ENCODE measurements at regions of chr11 and their contacts with region 1.

Region 1: GRCh38 chr11:130213143-130213978 is 53.8 kb downstream of the ST14 start:
- DNase-seq: peak; percentile 84
- ATAC-seq: peak; percentile 70
- H3K4me3 Mint-ChIP-seq: no peak overlapping the region
- H3K27ac Mint-ChIP-seq: no peak overlapping the region
- H3K4me1 Mint-ChIP-seq: peaks cover 22% of the 10 kb centered on the region
- H3K27me3 Mint-ChIP-seq: no peaks in the 10 kb centered on the region
- CTCF ChIP-seq: peak; percentile 99

Region 2: GRCh38 chr11:130223291-130223971 is 10.1 kb after region 1 on chr11:
- CTCF ChIA-PET with region 1: interaction called, 10 read pairs
- POLR2A ChIA-PET with region 1: interaction called, 3 read pairs
- DNase-seq: no peak
- ATAC-seq: no peak
- H3K4me3 Mint-ChIP-seq: no peak overlapping the region
- H3K27ac Mint-ChIP-seq: peak overlapping the region; percentile 31; the same call in 1 of the 2 replicates
- H3K4me1 Mint-ChIP-seq: no peaks in the 10 kb centered on the region
- H3K27me3 Mint-ChIP-seq: no peaks in the 10 kb centered on the region
- CTCF ChIP-seq: no peak

Region 3: DNA sequence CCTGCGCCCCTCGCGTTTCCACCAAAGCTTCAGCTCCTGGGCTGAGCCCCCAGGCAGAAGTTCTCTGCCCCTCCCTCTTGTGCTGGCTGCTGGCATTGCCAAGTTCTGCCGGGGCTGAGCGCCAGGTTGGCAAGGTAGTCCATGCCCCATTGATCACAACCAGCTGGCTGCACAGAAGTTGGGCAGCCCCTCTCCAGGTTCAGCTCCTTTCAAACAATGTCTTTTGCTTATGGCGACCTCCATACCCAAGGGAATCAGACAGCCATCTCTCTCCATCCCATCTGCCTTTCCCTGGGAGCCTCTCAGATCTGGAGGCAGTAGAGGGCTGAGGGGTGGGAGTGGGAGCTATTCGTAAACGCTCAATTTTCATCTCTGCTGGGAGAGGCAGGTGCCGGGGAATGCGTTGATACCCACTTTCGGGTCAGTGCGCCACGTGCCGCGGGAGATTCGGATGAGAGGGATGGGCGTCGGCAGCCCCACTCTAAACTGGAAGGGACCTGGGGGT is 213.5 kb after region 1 on chr11:
- CTCF ChIA-PET with region 1: interaction called, 39 read pairs
- POLR2A ChIA-PET with region 1: no interaction called
- DNase-seq: no peak
- ATAC-seq: no peak
- H3K4me3 Mint-ChIP-seq: peak overlapping the region; percentile 69
- H3K27ac Mint-ChIP-seq: no peak overlapping the region
- H3K4me1 Mint-ChIP-seq: peaks cover 25% of the 10 kb centered on the region
- H3K27me3 Mint-ChIP-seq: peaks cover 46% of the 10 kb centered on the region
- CTCF ChIP-seq: no peak